Endothelial cell of umbilical vein (primary cell): ENCODE measurements at regions of chr1 and their contacts with region 1.

Region 1: DNA sequence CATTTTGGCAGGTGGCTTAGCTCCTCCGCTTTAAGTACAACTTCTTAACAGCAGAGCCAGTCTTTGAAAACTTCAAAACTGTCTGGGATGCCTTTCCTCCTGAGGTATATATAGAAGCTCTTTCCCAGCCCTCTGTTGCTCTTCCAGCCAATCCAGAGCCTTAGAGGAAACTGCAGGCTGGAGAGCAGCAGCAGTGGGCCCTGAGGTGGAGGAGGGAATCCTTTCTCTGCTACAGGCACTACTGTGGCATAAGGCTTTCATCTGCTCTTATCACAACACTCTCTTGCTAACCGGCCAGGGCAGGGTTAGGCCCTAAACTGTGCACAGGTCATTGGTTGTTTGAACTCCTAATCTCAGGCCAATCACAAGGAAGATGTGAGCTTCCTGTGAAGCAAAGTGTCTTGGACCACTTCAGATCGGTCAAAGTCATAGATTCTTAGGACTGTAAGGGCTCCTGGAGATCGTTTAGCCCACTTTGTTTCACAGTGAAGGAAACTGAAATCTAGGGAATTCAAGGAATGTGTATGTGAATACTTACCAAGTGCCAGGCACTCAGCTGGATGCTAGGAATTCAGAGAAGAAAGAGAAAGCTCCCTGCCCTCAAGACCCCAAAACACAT is at the start of gene RGS5:
- DNase-seq: peak; percentile 78
- H3K4me3 ChIP-seq: peak within 1 kb of the TSS; percentile 25 to 98 (median 92)
- H3K27ac ChIP-seq: peak within 1 kb of the TSS; percentile 77
- H3K4me1 ChIP-seq: peaks cover 41% of the 10 kb centered on the region
- H3K27me3 ChIP-seq: no peaks in the 10 kb centered on the region
- CTCF ChIP-seq: no peak
- POLR2A ChIP-seq: peak; percentile 67
- total RNA-seq, gene RGS5: 770 and 1,035 TPM in 2 replicates

Region 2: GRCh38 chr1:162854245-162854882 is 348.6 kb before region 1 on chr1:
- CTCF ChIA-PET with region 1: interaction called, 5 read pairs
- POLR2A ChIA-PET with region 1: no interaction called
- dilution Hi-C with region 1: no loop called
- intact Hi-C with region 1: loop called (anchors 1 kb)
- DNase-seq: peak; percentile 82
- H3K4me3 ChIP-seq: peak overlapping the region in 1 of 3 experiments; percentile 4
- H3K27ac ChIP-seq: peak overlapping the region; percentile 93
- H3K4me1 ChIP-seq: peaks cover 57% of the 10 kb centered on the region
- H3K27me3 ChIP-seq: no peaks in the 10 kb centered on the region
- CTCF ChIP-seq: peak; percentile 63 to 68
- POLR2A ChIP-seq: peak; percentile 7

Region 3: DNA sequence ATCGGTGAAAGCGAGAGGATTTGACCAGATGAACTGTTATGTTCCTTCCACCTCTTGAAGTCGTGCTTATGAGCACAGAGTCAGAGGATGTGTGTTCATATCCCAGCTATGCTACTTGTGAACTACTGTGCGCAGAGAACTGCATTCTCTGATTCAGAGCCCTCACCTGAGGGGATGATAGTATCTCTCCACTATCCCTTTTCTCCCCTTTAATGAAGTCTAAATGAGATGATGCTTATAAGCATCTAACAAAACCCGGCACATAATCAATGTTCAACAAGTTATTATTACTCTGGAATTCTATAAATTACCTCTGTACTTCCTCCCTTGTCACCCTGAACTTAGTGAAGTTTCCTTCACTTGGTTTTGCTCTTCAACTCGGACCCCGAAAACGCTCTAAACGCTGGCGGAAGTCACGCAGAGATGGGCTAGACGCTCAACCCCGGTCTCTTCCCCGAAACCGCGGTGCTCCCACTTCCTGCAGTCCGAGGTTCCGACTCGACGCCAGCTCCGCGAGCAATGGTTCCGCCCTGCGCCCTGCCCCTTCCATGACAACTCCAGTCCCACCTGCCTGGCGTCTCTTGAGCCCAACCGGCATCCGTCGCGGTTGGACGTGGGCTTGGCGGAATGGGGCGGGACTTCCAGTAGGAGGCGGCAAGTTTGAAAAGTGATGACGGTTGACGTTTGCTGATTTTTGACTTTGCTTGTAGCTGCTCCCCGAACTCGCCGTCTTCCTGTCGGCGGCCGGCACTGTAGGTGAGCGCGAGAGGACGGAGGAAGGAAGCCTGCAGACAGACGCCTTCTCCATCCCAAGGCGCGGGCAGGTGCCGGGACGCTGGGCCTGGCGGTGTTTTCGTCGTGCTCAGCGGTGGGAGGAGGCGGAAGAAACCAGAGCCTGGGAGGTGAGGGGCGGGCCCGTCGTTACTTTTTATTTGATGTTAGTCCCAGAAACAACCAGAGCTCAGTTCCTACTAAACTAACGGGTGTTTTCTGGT is 118.7 kb after region 1 on chr1 and contains the start of gene NUF2:
- CTCF ChIA-PET with region 1: interaction called, 4 read pairs
- POLR2A ChIA-PET with region 1: interaction called, 3 read pairs
- dilution Hi-C with region 1: no loop called
- intact Hi-C with region 1: loop called (anchors 2 kb)
- DNase-seq: peak; percentile 98
- H3K4me3 ChIP-seq: peak within 1 kb of the TSS; percentile 56 to 98 (median 93)
- H3K27ac ChIP-seq: peak within 1 kb of the TSS; percentile 71
- H3K4me1 ChIP-seq: peaks cover 23% of the 10 kb centered on the region
- H3K27me3 ChIP-seq: no peaks in the 10 kb centered on the region
- CTCF ChIP-seq: no peak
- POLR2A ChIP-seq: peak; percentile 84
- total RNA-seq, gene NUF2: 38.6 and 38.7 TPM in 2 replicates